ENCODE measurements at regions of chr11 and their contacts with region 1.

Region 1: DNA sequence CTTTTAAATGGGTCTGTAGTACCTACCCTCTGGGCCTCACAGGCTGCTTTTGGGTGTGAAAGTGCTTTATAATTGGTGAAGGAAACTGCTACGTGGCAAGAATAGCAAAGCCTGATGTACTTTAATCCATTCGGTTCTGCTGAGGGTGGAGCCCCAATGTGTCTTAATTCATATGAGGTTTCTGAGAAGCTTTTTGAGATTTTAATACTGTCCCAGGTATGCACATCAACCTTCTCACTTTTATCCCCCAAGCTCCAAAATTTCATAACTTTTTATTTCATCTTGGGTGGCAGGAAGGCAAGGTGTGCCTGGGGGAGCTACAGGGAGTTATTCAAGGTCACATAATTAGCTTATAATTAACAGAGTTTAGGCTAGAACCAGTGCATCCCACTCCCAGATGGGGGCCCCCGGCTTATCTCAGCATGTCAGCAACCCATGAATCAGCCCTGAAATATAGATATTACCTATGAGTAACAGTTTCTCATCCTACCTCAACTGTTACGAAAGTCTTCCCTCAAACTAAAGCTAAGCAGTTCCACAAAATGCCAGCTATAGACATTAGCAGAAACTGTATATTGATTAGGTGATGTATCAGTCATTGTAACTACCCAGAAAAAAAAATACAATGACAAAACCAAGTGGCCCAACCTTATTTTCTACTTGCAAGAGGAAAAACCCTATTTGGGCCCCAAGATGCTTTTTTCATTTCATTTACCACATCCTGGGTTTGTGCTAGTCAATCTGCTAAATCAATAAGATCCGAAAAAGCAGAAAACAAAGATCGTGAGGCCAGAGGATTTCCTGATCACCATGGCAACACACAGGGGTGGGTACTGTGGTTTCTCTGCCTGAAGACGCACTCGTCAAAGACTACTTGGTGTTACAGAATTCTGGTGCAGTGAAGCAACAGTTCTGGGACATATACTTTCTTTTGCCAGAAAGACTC is 26.7 kb downstream of the CD44 start:
- DNase-seq: peak; percentile 91
- H3K4me3 Mint-ChIP-seq: peak overlapping the region; percentile 67
- H3K27ac Mint-ChIP-seq: peak overlapping the region; percentile 98
- H3K4me1 Mint-ChIP-seq: peaks cover 98% of the 10 kb centered on the region
- H3K27me3 Mint-ChIP-seq: no peaks in the 10 kb centered on the region

Region 2: GRCh38 chr11:34877375-34877975 is 288.2 kb before region 1 on chr11:
- intact Hi-C with region 1: no loop called
- DNase-seq: no peak
- H3K4me3 Mint-ChIP-seq: no peak overlapping the region
- H3K27ac Mint-ChIP-seq: no peak overlapping the region
- H3K4me1 Mint-ChIP-seq: no peaks in the 10 kb centered on the region
- H3K27me3 Mint-ChIP-seq: no peaks in the 10 kb centered on the region

Region 3: DNA sequence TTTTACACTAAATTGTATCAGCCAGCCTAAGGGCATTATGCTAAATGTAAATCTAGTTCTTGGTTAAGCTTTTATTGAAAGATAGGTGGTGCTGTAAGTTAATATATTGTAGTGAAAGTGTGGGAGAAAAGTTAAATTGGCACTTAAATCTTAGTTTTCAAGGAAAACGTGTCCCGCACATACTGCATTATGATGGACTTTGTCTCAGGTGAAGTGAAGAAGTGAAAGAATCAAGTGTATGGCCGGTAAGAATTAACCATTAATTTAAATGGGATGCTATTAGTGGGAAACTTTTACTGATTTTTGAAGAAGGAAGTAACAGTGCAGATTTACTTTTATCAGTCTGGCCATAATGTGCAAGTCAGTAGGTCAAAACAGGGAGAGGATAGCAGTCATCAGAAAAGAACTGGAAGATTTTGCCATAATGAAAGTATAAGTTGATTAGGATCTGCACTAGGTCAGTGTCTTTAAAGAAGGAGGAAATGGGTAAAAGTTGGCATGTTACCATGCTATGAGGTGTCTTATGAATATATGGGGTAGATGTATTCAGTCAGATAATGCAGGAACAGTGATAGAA is 167.7 kb before region 1 on chr11:
- intact Hi-C with region 1: loop called (anchors 5 kb)
- DNase-seq: no peak
- H3K4me3 Mint-ChIP-seq: peak overlapping the region; percentile 10
- H3K27ac Mint-ChIP-seq: no peak overlapping the region
- H3K4me1 Mint-ChIP-seq: peaks cover 22% of the 10 kb centered on the region
- H3K27me3 Mint-ChIP-seq: peaks cover 2% of the 10 kb centered on the region

Region 4: GRCh38 chr11:35013514-35014233 is 152.0 kb before region 1 on chr11:
- intact Hi-C with region 1: loop called (anchors 1 kb)
- DNase-seq: peak; percentile 24
- H3K4me3 Mint-ChIP-seq: no peak overlapping the region
- H3K27ac Mint-ChIP-seq: peak overlapping the region; percentile 72
- H3K4me1 Mint-ChIP-seq: peaks cover 54% of the 10 kb centered on the region
- H3K27me3 Mint-ChIP-seq: peaks cover 20% of the 10 kb centered on the region

Region 5: GRCh38 chr11:35066783-35067423 is 98.8 kb before region 1 on chr11:
- intact Hi-C with region 1: loop called (anchors 1 kb)
- DNase-seq: no peak
- H3K4me3 Mint-ChIP-seq: no peak overlapping the region
- H3K27ac Mint-ChIP-seq: peak overlapping the region; percentile 24
- H3K4me1 Mint-ChIP-seq: peaks cover 22% of the 10 kb centered on the region
- H3K27me3 Mint-ChIP-seq: peaks cover 10% of the 10 kb centered on the region

Region 6: DNA sequence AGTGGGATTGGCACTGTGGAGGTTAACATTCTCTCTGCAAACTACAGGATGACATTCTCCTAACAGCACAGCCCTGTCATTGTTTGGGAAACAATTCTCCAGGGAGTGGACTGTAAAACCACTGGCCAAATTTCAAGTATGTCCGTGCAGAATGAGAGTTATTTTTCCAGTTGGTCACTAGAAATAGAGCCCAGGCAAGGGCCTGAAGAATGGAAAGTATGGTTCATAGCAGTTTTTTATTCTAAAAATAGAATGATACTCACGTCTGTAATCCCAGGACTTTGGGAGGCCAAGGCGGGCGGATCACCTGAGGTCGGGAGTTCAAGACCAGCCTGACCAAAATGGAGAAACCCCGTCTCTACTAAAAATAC is 65.7 kb before region 1 on chr11:
- intact Hi-C with region 1: no loop called
- DNase-seq: no peak
- H3K4me3 Mint-ChIP-seq: no peak overlapping the region
- H3K27ac Mint-ChIP-seq: no peak overlapping the region
- H3K4me1 Mint-ChIP-seq: peaks cover 6% of the 10 kb centered on the region
- H3K27me3 Mint-ChIP-seq: peaks cover 26% of the 10 kb centered on the region

Region 7: DNA sequence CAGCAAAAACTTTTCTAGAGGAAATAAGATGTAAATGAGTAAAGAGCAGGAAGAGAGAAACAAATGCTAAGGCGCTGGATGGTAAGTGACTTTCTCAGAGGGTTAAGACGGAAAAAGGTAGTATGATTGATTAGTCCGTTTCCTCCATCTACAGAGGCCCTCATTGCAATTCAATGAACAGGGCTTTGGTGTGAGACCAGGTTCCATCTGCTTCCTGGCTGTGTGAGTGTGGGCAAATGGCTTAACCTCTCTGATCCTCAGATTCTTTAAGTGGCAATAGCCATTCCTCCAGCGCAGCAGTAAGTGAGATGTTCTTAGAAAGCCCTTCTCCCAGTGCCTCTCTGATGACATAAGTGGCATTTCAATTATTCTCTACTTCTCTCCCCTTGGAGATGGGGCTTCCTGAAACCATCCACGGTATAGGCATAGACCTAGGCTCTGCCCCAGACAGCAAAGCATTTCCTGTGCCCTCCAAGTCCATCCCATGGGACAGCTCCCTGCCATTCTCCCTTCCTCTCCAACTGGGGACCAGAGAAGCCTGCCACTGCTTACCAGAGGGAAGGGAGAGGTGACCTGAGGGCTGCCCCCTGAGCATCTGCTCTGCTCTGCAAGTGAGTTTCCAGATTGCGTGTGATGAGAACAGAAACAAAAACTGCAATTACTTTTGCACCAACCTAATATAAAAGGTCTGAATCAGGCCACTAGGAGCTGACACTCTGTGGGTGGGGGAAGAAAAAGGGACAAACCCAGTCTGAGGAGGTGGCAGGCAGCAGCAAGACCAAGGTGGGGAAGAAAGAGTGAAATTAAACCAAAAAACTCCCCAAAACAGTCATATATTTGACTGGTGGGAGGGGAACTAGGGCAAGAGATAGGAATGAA is 39.5 kb before region 1 on chr11:
- intact Hi-C with region 1: loop called (anchors 1 kb)
- DNase-seq: no peak
- H3K4me3 Mint-ChIP-seq: peak overlapping the region; percentile 57
- H3K27ac Mint-ChIP-seq: peak overlapping the region; percentile 79
- H3K4me1 Mint-ChIP-seq: peaks cover 56% of the 10 kb centered on the region
- H3K27me3 Mint-ChIP-seq: peaks cover 7% of the 10 kb centered on the region

Region 8: DNA sequence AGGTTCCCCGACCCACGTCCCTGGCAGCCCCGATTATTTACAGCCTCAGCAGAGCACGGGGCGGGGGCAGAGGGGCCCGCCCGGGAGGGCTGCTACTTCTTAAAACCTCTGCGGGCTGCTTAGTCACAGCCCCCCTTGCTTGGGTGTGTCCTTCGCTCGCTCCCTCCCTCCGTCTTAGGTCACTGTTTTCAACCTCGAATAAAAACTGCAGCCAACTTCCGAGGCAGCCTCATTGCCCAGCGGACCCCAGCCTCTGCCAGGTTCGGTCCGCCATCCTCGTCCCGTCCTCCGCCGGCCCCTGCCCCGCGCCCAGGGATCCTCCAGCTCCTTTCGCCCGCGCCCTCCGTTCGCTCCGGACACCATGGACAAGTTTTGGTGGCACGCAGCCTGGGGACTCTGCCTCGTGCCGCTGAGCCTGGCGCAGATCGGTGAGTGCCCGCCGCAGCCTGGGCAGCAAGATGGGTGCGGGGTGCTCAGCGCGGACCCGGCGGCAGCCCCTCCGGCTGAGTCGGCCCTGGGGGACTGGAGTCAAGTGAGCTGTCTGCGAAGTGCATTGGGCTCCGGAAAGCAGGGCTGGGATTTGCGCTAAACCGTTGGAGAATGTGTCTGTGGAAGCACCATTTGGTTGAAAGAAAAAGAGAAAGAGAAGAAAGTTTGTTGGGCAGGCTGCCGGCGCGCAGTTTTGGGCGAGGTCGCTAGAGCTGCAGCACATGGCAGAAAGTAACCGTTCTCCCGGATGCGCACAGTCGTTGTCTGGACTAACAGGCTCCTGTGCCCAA is 26.6 kb before region 1 on chr11 and contains the start of gene CD44:
- intact Hi-C with region 1: no loop called
- DNase-seq: peak; percentile 60
- H3K4me3 Mint-ChIP-seq: peak within 1 kb of the TSS; percentile 87
- H3K27ac Mint-ChIP-seq: peak within 1 kb of the TSS; percentile 87
- H3K4me1 Mint-ChIP-seq: peaks cover 49% of the 10 kb centered on the region
- H3K27me3 Mint-ChIP-seq: peaks cover 11% of the 10 kb centered on the region
- total RNA-seq, gene CD44: 232 and 249 TPM in 2 replicates

Region 9: DNA sequence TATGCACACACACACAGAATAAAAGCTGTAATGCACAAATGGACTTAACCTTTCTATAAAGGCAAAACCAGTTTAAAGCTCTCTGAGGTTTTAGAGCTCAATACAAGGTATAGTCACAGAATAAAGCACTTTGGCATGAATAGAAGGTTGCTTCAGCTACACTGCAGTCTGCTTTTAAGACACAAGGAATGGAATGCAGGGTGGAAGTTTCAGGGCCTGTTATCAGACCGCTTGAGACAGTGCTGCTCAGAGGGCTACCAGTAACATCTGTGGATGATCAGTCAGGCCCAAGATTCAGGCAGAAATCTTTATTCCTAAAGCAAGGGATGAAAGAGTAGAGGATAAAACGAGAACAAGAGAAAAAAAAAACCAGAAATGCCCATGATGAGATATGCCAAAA is 20.0 kb after region 1 on chr11:
- intact Hi-C with region 1: no loop called
- DNase-seq: no peak
- H3K4me3 Mint-ChIP-seq: no peak overlapping the region
- H3K27ac Mint-ChIP-seq: no peak overlapping the region
- H3K4me1 Mint-ChIP-seq: peaks cover 36% of the 10 kb centered on the region
- H3K27me3 Mint-ChIP-seq: no peaks in the 10 kb centered on the region

Region 10: DNA sequence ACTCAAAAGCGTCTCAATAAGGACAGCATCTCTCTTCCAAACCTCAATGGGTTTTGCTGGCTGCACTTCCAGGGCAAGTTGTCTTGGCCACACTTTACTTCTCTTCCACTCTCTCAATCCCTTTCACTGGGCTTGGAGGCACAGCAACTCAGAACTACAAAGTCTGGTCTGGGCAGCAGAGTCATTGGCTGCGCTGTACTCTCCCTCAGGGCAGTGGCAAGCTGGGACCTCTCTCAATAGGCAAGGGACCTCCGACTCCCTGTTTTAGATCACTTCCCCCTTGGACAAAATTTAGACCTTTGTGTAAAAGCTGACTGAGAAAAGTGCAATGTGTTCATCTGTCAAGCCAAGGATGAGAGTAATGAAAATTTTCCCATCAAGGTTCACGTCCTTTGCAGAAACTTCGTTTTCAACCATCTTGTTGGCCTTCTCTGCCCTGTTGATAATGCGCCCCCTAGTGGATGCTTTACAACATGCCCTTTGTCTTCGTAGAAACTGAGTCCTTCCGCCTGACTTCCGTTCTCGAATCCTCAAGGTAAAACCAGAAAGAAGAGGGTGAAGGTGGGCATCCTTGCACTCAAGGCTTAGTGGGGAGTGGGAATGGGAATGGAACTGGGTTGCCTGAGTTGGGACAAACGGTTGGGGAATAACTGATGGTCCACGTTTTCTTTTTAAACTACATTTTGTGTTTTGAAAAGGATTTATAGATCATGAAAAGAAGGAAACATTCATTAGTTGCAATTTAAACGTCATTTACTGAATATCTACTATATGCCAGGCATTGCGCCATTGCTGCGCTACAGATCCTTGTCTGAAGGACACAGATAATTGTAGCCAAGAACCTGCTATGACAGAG is 72.4 kb after region 1 on chr11:
- intact Hi-C with region 1: loop called (anchors 1 kb)
- DNase-seq: peak; percentile 34
- H3K4me3 Mint-ChIP-seq: no peak overlapping the region
- H3K27ac Mint-ChIP-seq: no peak overlapping the region
- H3K4me1 Mint-ChIP-seq: peaks cover 78% of the 10 kb centered on the region
- H3K27me3 Mint-ChIP-seq: peaks cover 13% of the 10 kb centered on the region

Region 11: GRCh38 chr11:35343033-35343598 is 177.4 kb after region 1 on chr11:
- intact Hi-C with region 1: loop called (anchors 1 kb)
- DNase-seq: peak; percentile 74
- H3K4me3 Mint-ChIP-seq: peak overlapping the region; percentile 20
- H3K27ac Mint-ChIP-seq: peak overlapping the region; percentile 81
- H3K4me1 Mint-ChIP-seq: peaks cover 46% of the 10 kb centered on the region
- H3K27me3 Mint-ChIP-seq: no peaks in the 10 kb centered on the region

Measured in activated T-helper 2 cell treated with anti-CD3 and anti-CD28 coated beads, Interferon-gamma antibody, Interleukin-2, Interleukin-4, amounts not matched to agents 10 μg/mL and 5 μg/mL and 100 μg/mL, durations not matched to agents 14 hours and 24 hours and 36 hours (primary cell).